Esophagus muscularis mucosa (tissue), 4 donors: ENCODE measurements at regions of chr2 and their contacts with region 1.

Region 1: DNA sequence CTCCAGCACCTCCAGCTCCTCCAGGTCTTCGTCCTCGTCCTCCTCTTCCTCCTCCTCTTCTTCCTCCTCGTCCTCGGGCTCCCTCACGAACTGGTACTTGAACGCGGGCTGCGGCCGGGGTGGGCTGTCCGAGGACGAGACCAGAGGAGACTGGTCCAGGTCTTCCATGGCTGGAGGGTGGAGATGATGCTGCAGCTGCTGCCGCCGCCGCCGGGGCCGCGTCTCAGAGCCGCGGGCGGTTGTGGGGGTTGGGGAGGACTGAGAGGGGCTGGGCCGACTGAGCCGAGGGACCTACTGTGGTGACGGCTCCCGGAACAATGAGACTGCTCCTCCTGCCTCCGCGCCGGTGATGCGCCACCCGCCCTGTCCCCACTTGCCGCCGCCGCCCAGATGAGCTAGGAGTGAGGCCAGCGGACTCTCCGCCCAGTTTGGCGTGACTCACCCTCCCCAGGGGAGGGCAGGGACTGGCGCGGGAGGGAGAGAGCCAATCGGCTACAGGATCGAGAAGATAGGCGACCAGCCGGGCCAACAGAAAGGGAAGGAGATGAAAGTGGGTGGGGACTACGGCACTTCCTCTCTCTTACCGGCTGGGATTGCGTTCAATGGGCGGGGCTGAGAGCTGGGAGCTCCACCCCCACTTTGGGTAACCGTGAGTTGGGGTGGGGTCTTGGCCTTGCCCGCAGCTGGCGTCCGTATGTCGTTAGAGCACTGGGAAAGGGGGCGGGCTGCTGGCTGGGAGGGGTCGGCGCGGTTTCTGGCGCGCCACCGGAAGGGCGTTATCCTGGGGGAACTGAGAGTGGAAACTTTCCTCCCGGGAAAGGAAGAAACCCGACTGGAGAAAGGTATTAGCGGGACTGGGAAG is at the start of gene RTN4:
- DNase-seq: peak; percentile 100
- H3K4me3 ChIP-seq: peak within 1 kb of the TSS; percentile 85 to 100 (median 98)
- H3K27ac ChIP-seq: peak within 1 kb of the TSS; percentile 96 to 100 (median 100)
- H3K4me1 ChIP-seq: peaks cover 10 to 47% (median 41%) of the 10 kb centered on the region in 4 donors
- H3K27me3 ChIP-seq: no peaks in the 10 kb centered on the region
- CTCF ChIP-seq: peak in 1 of 3 experiments; percentile 34
- EP300 ChIP-seq: no peak
- POLR2A ChIP-seq: peak; percentile 96
- total RNA-seq, gene RTN4: 214 to 272 (median 251) TPM

Region 2: DNA sequence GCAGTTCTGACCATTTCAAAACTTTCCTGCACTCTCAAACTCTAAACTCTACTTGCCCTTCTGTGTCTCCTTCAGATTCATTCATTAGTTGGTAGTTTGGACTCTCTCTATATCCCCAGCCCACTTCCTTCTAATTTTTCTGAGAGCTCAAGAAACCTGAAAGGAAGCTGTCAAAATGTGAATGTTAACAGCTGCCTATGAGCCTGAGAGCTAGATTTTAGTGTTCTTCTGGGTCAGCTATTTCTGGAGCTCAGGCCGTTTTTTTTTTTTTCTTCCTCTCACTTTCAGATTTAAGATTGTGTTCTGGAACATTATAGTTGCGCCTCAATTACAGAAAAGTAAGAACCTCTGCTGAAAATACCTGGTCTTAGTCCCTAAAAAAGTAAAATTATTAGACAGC is 73.2 kb before region 1 on chr2:
- intact Hi-C with region 1: loop called (anchors 10 kb)
- DNase-seq: no peak
- H3K4me3 ChIP-seq: peak overlapping the region in 1 of 4 donors; percentile 5
- H3K27ac ChIP-seq: peak overlapping the region; percentile 41 to 71 (median 51)
- H3K4me1 ChIP-seq: peaks cover 30 to 96% (median 90%) of the 10 kb centered on the region in 4 donors
- H3K27me3 ChIP-seq: no peaks in the 10 kb centered on the region
- CTCF ChIP-seq: no peak
- EP300 ChIP-seq: no peak
- POLR2A ChIP-seq: no peak

Region 3: DNA sequence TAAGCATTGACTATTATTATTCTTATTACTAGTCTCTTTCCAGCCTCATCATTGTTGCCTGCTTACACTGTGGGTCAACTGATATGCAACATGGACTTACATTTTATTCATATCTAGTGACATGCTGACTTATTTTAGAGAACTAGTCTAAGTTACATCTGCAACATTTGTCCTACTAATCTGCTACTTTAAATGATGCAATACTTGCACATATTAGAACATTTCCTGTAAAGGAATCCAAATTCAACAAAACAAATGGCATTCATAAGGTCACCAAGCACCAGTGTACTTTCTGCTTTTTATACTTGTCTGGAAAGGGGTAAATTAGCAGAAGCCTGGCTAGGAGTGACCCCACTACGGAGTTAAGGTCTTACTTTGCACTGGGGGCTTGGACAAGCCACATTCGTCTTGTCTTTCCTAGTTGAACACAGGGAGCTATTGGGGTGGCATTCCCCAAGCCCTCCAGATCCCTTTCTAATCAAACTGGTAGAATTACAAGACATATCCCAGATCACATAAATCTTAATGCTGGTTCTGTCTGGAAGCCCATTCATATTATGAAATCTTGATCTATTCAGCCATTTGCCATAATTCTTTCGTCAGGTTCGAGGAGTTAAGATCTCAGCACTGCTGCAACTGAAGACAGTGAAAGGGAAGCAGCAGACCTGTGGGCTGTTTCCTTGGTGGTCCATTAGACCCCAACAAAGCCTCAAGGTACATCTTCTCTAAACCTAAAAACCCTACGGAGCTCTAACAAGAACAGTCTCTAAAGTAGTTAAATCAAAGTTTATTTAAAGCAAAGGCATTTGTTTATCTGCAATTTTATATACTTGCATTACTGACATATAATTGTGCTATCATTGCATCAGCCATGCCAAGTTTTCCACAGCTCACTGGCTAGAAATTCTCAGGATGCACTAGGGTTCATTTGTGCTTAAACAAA is 49.8 kb after region 1 on chr2:
- intact Hi-C with region 1: loop called (anchors 5 kb)
- DNase-seq: peak; percentile 84
- H3K4me3 ChIP-seq: peak overlapping the region in 3 of 4 donors; percentile 14 to 21 (median 19)
- H3K27ac ChIP-seq: peak overlapping the region; percentile 72 to 86 (median 83)
- H3K4me1 ChIP-seq: peaks cover 36 to 77% (median 71%) of the 10 kb centered on the region in 4 donors
- H3K27me3 ChIP-seq: no peaks in the 10 kb centered on the region
- CTCF ChIP-seq: no peak
- EP300 ChIP-seq: no peak
- POLR2A ChIP-seq: no peak

Region 4: DNA sequence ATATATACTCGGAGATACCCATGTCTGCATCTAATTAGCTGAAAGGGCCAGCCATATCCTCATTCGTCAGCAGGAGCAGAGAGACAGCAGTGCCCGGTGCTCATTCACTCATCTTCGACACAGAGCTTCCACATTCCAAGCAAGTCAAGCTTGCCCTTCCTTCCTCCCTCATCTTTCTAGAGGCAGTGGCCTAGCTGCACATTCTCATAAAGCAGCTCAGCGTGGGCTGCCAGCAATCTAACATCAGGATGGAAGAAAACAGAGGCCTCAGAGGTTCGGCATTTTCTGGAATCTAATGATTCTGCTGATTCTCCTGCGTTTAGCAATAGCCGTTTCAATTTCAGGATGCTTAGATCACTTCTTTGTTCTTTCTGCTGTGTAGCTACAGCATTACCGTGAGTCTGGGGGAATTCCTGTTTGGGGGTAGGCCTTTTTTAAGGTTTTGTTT is 112.9 kb after region 1 on chr2:
- intact Hi-C with region 1: loop called (anchors 2 kb)
- DNase-seq: peak; percentile 79
- H3K4me3 ChIP-seq: no peak overlapping the region
- H3K27ac ChIP-seq: peak overlapping the region; percentile 35 to 62 (median 55)
- H3K4me1 ChIP-seq: peaks cover 24 to 95% (median 76%) of the 10 kb centered on the region in 4 donors
- H3K27me3 ChIP-seq: no peaks in the 10 kb centered on the region
- CTCF ChIP-seq: no peak
- EP300 ChIP-seq: no peak
- POLR2A ChIP-seq: no peak